Common myeloid progenitor, CD34-positive (primary cell): ENCODE measurements at regions of chr14 and their contacts with region 1.

Region 1: GRCh38 chr14:91286530-91286937 is 42.0 kb upstream of the GPR68 start:
- DNase-seq: peak; percentile 73 to 83 (median 73)
- H3K4me3 ChIP-seq: no peak overlapping the region
- H3K27ac ChIP-seq: no peak overlapping the region
- H3K4me1 ChIP-seq: peaks cover 0 to 10% (median 1%) of the 10 kb centered on the region in 4 experiments
- H3K27me3 ChIP-seq: no peaks in the 10 kb centered on the region

Region 2: GRCh38 chr14:91298576-91298975 is 12.0 kb after region 1 on chr14:
- CTCF ChIA-PET with region 1: interaction called, 17 read pairs
- POLR2A ChIA-PET with region 1: interaction called, 3 read pairs
- DNase-seq: no peak
- H3K4me3 ChIP-seq: no peak overlapping the region
- H3K27ac ChIP-seq: peak overlapping the region in 1 of 2 experiments; percentile 6
- H3K4me1 ChIP-seq: peaks cover 0 to 24% (median 9%) of the 10 kb centered on the region in 4 experiments
- H3K27me3 ChIP-seq: no peaks in the 10 kb centered on the region